Spleen (tissue), 13 donors: ENCODE measurements at regions of chr1 and their contacts with region 1.

Region 1: DNA sequence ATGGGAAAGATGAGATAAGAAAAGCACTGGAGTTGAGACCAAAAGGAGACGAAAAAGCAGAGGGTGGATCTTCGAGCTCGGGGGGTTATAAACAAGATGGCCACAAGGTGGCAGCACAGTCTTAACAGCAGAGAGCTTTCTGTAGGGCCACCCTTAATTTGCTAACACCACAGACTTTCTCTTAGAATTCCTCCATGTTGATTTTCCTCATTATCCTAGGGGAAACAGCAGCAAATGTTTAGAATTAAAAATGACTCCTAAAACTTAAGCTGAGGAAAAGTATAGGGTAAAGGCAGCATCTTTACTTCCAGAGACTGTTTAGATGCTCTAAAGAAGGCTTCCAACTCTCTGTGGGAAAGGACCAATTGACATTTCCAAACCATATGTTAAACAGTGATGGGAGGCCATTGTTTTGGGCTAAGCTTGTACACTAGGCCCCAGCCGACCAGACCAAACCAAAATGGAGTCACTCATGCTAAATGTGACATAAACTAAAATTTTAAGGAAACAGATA is 2.5 kb upstream of the APOBEC4 start:
- DNase-seq: peak; percentile 82
- H3K4me3 ChIP-seq: no peak overlapping the region
- H3K27ac ChIP-seq: no peak overlapping the region
- H3K4me1 ChIP-seq: peaks cover 0 to 49% (median 33%) of the 10 kb centered on the region in 6 donors
- H3K27me3 ChIP-seq: no peaks in the 10 kb centered on the region
- CTCF ChIP-seq: peak; percentile 62 to 88 (median 84)
- POLR2A ChIP-seq: no peak

Region 2: GRCh38 chr1:183702087-183702812 is 46.6 kb after region 1 on chr1:
- intact Hi-C with region 1: no loop called
- DNase-seq: no peak
- H3K4me3 ChIP-seq: no peak overlapping the region
- H3K27ac ChIP-seq: no peak overlapping the region
- H3K4me1 ChIP-seq: peaks cover 0 to 7% (median 4%) of the 10 kb centered on the region in 6 donors
- H3K27me3 ChIP-seq: no peaks in the 10 kb centered on the region
- CTCF ChIP-seq: no peak
- POLR2A ChIP-seq: no peak

Region 3: GRCh38 chr1:183915625-183916510 is 260.2 kb after region 1 on chr1:
- intact Hi-C with region 1: loop called (anchors 5 kb)
- DNase-seq: no peak
- H3K4me3 ChIP-seq: no peak overlapping the region
- H3K27ac ChIP-seq: peak overlapping the region in 4 of 8 donors; percentile 15 to 41 (median 18)
- H3K4me1 ChIP-seq: peaks cover 10 to 52% (median 47%) of the 10 kb centered on the region in 6 donors
- H3K27me3 ChIP-seq: no peaks in the 10 kb centered on the region
- CTCF ChIP-seq: peak; percentile 73 to 90 (median 82)
- POLR2A ChIP-seq: no peak

Region 4: GRCh38 chr1:184684285-184685074 is 1028.9 kb after region 1 on chr1:
- intact Hi-C with region 1: loop called (anchors 10 kb)
- DNase-seq: no peak
- H3K4me3 ChIP-seq: no peak overlapping the region
- H3K27ac ChIP-seq: no peak overlapping the region
- H3K4me1 ChIP-seq: peaks cover 0 to 8% (median 1%) of the 10 kb centered on the region in 6 donors
- H3K27me3 ChIP-seq: no peaks in the 10 kb centered on the region
- CTCF ChIP-seq: no peak
- POLR2A ChIP-seq: no peak